IMR-90 (cell line): ENCODE measurements at regions of chr4 and their contacts with region 1.

Region 1: GRCh38 chr4:37977471-37978247 is 17.5 kb downstream of the PTTG2 start:
- DNase-seq: peak; percentile 55
- ATAC-seq: peak; percentile 76
- H3K4me3 ChIP-seq: peak overlapping the region; percentile 76
- H3K27ac ChIP-seq: peak overlapping the region; percentile 18; the same call in 1 of the 2 replicates
- H3K4me1 ChIP-seq: peaks cover 8% of the 10 kb centered on the region
- H3K27me3 ChIP-seq: no peaks in the 10 kb centered on the region
- CTCF ChIP-seq: peak; percentile 62
- POLR2A ChIP-seq: 0 out of 2 replicates have a peak, but pooled peaks have one; percentile 34
- RAD21 ChIP-seq: peak; percentile 49

Region 2: DNA sequence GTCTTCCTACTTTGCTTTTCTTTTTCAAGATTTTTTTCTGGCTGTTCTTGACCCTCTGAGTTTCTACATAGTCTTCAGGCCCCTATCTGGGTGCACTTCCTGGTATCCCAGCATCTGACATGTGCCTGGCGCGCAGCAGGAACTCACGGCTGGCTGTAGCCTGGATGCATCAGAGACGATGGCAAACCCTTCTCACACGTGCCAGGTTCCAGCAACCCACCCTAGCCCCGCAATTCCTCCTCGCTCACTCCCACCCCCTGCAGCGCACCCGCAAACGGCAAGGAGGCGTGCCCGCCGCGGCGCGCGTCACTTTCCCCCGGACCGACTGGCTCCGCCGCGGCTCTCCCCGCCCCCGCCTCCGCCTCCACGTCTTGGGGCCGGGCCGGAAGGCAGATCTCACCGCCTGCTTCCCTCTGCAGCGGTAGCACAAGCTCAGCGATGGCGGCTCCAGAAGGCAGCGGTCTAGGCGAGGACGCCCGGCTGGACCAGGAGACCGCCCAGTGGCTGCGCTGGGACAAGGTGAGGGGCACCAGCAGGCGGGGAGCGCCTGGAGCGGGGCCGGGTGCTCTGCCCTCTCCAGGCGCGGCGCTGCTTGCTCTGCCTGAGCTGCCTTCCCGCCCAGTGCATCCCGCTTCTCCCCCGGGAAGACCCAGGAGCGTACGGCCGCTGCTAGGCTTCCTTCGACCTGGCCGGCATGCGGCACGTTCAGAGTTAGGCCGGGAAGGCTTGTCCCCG is 151.2 kb before region 1 on chr4 and contains the start of gene PGM2:
- CTCF ChIA-PET with region 1: no interaction called
- POLR2A ChIA-PET with region 1: no interaction called
- dilution Hi-C with region 1: no loop called
- in situ Hi-C with region 1: no loop called
- intact Hi-C with region 1: loop called (anchors 1 kb)
- DNase-seq: peak; percentile 73
- ATAC-seq: peak; percentile 97
- H3K4me3 ChIP-seq: peak within 1 kb of the TSS; percentile 82
- H3K27ac ChIP-seq: peak within 1 kb of the TSS; percentile 61
- H3K4me1 ChIP-seq: peaks cover 2% of the 10 kb centered on the region
- H3K27me3 ChIP-seq: no peaks in the 10 kb centered on the region
- CTCF ChIP-seq: 0 out of 2 replicates have a peak, but pooled peaks have one; percentile 6
- POLR2A ChIP-seq: peak; percentile 69
- RAD21 ChIP-seq: no peak; the same call in 1 of the 2 replicates
- total RNA-seq, gene PGM2: 26.2 and 32.2 TPM in 2 replicates

Region 3: DNA sequence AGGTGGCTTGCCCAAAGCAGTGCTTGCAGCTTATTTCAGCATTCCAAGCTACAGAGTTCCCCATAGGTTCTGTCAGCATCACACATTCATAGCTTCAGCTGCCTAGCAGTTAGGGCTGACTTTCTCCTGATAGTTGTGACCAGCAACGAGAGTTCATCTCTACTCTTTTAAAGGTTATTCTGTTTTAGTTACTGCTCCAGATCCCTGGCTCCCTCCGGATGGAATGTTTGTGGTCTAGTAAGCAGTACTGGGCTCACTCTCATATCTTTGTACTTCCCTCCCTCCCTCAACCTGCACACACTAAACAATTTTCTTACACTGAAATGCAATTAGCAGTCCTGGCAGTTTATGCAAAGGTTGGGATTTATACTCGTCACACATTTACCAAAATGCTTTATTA is 26.4 kb after region 1 on chr4:
- CTCF ChIA-PET with region 1: no interaction called
- POLR2A ChIA-PET with region 1: no interaction called
- dilution Hi-C with region 1: no loop called
- in situ Hi-C with region 1: no loop called
- intact Hi-C with region 1: loop called (anchors 2 kb)
- DNase-seq: peak; percentile 51
- ATAC-seq: peak; percentile 79
- H3K4me3 ChIP-seq: no peak overlapping the region
- H3K27ac ChIP-seq: no peak overlapping the region
- H3K4me1 ChIP-seq: peaks cover 16% of the 10 kb centered on the region
- H3K27me3 ChIP-seq: no peaks in the 10 kb centered on the region
- CTCF ChIP-seq: no peak
- POLR2A ChIP-seq: no peak
- RAD21 ChIP-seq: no peak

Region 4: GRCh38 chr4:38034986-38035882 is 57.6 kb after region 1 on chr4:
- CTCF ChIA-PET with region 1: interaction called, 7 read pairs
- POLR2A ChIA-PET with region 1: no interaction called
- dilution Hi-C with region 1: no loop called
- in situ Hi-C with region 1: no loop called
- intact Hi-C with region 1: loop called (anchors 1 kb)
- DNase-seq: peak; percentile 70
- ATAC-seq: peak; percentile 85
- H3K4me3 ChIP-seq: no peak overlapping the region
- H3K27ac ChIP-seq: no peak overlapping the region
- H3K4me1 ChIP-seq: peaks cover 1% of the 10 kb centered on the region; the same call in 1 of the 2 replicates
- H3K27me3 ChIP-seq: no peaks in the 10 kb centered on the region
- CTCF ChIP-seq: peak; percentile 75
- POLR2A ChIP-seq: no peak
- RAD21 ChIP-seq: peak; percentile 75

Region 5: DNA sequence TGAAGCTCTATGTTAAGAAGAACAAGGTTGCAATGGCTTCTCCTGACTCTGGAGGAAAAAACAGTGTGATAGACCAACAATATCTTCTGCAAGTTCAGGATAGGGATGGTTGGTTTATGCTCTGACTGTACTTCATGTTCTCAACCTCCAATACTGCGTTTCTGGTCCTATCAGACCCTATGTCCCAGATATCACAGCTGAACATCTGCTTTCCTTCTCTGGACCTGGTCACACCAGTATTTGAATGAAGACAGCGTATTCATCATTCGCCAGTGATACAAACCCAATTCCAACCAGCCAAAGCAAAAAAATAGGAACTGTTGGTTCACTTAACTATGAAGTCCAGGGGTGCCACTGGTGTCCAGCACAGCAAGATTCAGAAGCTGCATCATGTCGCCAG is 561.8 kb after region 1 on chr4:
- CTCF ChIA-PET with region 1: no interaction called
- POLR2A ChIA-PET with region 1: no interaction called
- dilution Hi-C with region 1: no loop called
- in situ Hi-C with region 1: no loop called
- intact Hi-C with region 1: no loop called
- DNase-seq: no peak
- ATAC-seq: no peak
- H3K4me3 ChIP-seq: no peak overlapping the region
- H3K27ac ChIP-seq: no peak overlapping the region
- H3K4me1 ChIP-seq: no peaks in the 10 kb centered on the region
- H3K27me3 ChIP-seq: peaks cover 10% of the 10 kb centered on the region
- CTCF ChIP-seq: no peak
- POLR2A ChIP-seq: no peak
- RAD21 ChIP-seq: no peak